CD4-positive, alpha-beta memory T cell (primary cell): ENCODE measurements at regions of chr15 and their contacts with region 1.

Region 1: GRCh38 chr15:38636597-38636996 is 72.0 kb upstream of the RASGRP1 start:
- DNase-seq: no peak
- H3K4me3 ChIP-seq: no peak overlapping the region
- H3K4me3 Mint-ChIP-seq: no peak overlapping the region
- H3K27ac ChIP-seq: no peak overlapping the region
- H3K27ac Mint-ChIP-seq: no peak overlapping the region
- H3K4me1 ChIP-seq: peaks cover 10% of the 10 kb centered on the region
- H3K4me1 Mint-ChIP-seq: peaks cover 13 to 21% (median 15%) of the 10 kb centered on the region in 4 donors
- H3K27me3 ChIP-seq: no peaks in the 10 kb centered on the region
- H3K27me3 Mint-ChIP-seq: no peaks in the 10 kb centered on the region

Region 2: DNA sequence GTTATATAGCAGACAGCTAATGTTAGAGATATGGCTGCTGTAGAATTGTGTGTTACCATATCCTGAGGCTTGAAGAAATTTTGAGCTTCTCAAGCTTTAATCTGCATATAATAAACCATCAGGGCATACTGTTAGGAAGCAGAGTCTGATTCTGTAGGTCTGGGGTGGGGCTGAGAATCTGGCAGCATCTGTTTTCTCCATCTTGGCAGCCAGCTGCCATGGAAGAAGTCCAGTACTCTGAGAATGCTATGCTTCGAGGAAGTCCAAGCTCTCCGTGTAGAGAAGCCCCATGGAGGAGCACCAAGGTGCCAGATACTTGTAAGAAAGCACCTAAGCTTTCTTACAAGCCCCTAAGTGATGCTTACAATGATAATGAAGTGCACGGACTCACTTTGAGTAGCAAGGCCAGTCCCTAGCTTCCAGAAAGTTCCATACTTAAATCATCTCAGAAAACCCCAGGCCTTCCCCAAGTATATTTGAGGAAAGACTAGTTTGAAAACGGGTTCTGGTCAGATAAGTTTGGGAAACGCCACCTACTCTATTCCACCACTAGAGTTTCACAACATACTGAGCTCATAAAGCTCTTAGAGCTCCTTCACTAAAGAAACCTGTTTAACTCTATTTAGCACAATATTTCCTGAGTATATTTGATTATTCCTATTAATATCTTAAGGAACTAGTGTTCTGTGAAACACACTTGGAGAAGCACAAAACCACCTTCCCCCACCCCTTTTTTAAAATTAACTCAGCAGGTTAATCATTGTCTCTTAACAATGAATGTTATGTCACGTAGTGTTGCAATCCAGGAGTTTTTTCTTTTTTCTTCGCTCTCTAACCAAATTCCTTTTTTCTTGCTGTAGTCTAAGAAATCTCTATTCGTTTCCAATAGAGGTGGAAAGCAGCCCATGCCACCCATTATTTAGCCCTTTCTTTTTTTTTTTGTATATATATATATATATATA is 12.1 kb before region 1 on chr15:
- CTCF ChIA-PET with region 1: interaction called, 18 read pairs
- POLR2A ChIA-PET with region 1: interaction called, 5 read pairs
- intact Hi-C with region 1: no loop called
- DNase-seq: no peak
- H3K4me3 ChIP-seq: no peak overlapping the region
- H3K4me3 Mint-ChIP-seq: no peak overlapping the region
- H3K27ac ChIP-seq: no peak overlapping the region
- H3K27ac Mint-ChIP-seq: peak overlapping the region in 1 of 7 donors; percentile 36
- H3K4me1 ChIP-seq: peaks cover 5% of the 10 kb centered on the region
- H3K4me1 Mint-ChIP-seq: peaks cover 11 to 18% (median 12%) of the 10 kb centered on the region in 4 donors
- H3K27me3 ChIP-seq: no peaks in the 10 kb centered on the region
- H3K27me3 Mint-ChIP-seq: peaks cover 0 to 2% of the 10 kb centered on the region in 2 donors

Region 3: DNA sequence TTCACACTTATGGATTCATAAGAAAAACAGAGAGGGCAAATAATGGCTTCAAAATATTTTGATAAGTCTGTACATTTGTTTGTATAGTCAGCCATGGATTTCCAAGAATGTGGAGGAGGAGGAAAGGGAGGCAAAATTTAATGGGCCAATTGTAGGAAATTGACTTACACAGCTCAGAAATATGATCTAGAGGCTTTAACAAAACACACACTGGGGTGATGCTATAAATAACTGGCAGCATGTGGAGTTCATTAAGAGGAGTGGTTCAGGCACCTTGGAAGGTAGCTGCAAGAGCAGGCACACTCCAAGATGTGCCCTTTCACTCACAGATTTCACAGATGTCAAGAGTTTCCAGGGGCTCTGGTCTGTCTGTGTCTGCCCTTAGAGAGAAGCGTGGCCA is 121.4 kb after region 1 on chr15:
- CTCF ChIA-PET with region 1: no interaction called
- POLR2A ChIA-PET with region 1: no interaction called
- intact Hi-C with region 1: no loop called
- DNase-seq: no peak
- H3K4me3 ChIP-seq: no peak overlapping the region
- H3K4me3 Mint-ChIP-seq: no peak overlapping the region
- H3K27ac ChIP-seq: no peak overlapping the region
- H3K27ac Mint-ChIP-seq: no peak overlapping the region
- H3K4me1 ChIP-seq: no peaks in the 10 kb centered on the region
- H3K4me1 Mint-ChIP-seq: no peaks in the 10 kb centered on the region
- H3K27me3 ChIP-seq: no peaks in the 10 kb centered on the region
- H3K27me3 Mint-ChIP-seq: peaks cover 4 to 6% of the 10 kb centered on the region in 2 donors